GM13977 (cell line): ENCODE measurements at regions of chr14 and their contacts with region 1.

Region 1: GRCh38 chr14:75709207-75709812 is 48.3 kb downstream of the TTLL5 start:
- DNase-seq: peak; percentile 51
- CTCF ChIP-seq: peak; percentile 84

Region 2: GRCh38 chr14:75982266-75983018 is 273.1 kb after region 1 on chr14:
- in situ Hi-C with region 1: loop called (anchors 10 kb)
- DNase-seq: peak; percentile 85
- CTCF ChIP-seq: peak; percentile 75

Region 3: GRCh38 chr14:76386915-76387782 is 677.8 kb after region 1 on chr14:
- in situ Hi-C with region 1: loop called (anchors 25 kb)
- DNase-seq: peak; percentile 87
- CTCF ChIP-seq: peak; percentile 98